ENCODE measurements at regions of chr3 and their contacts with region 1.

Region 1: DNA sequence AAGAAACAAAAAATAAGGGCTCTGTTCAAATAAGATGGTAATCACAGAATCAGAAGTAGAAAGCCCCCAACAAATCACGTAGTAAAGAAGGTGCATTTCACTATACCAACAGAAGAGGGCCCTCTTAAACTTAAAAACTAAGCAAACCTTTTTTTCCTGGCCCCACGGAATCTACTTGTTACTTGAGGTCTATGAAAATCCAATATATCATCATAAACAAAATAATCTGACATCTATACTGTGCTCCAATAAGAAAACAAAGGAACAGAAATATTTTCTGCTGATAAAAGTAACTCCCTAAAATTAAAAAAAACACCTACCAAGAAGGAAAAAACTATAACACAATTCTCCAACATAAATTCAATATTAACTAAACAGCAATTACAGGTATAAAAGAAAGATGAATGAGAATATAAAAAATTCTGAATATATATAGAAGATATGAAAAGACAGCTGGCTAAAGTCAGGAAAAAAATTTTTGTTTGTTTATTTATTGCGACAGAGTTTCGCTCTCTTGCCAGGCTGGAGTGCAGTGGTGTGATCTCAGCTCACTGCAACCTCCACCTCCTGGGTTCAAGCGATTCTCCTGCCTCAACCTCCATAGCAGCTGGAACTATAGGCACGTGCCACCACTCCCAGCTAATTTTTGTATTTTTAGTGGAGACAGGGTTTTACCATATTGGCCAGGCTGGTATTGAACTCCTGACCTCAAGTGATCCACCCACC is 81.8 kb downstream of the CLASP2 start:
- DNase-seq: no peak
- ATAC-seq: peak; percentile 53

Region 2: DNA sequence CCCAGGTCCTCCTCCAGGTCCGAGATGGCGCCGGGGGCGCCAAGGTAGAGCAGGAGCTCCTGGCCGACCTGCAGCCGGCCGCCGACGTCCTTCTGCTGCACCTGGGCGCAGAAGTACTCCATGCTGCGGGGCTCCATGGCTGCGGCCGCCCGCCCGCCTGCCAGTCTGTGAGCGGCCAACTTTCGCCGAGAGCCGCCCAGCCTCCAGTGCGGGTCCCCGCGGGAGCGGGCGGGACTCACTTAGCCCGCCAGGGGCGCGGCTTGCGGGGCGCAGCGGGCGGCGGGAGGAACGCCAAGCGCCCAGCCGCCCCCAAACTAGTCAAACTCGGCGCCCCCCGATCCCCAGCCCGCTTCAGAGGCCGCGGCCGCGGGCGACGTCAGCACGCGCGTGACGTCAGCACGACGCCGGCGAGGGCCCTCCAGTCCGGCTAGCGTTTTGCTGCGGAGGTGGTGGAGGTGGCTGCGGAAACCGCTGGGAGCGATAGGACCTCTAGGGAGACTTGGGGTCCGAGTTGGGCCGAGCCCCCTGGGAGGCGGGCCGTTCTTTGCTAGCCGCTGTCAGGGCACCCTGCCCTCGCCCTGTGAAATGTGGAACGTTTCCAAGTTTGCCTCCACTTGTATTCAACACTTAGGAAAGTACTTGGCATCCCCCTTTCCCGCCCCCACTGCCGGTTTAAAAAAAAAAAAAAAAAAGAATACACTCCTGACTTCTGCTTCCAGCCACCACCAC is 81.7 kb after region 1 on chr3 and contains the start of gene CLASP2:
- intact Hi-C with region 1: loop called (anchors 5 kb)
- DNase-seq: peak; percentile 93
- ATAC-seq: peak; percentile 98
- total RNA-seq, gene CLASP2: 68.3 TPM

Region 3: DNA sequence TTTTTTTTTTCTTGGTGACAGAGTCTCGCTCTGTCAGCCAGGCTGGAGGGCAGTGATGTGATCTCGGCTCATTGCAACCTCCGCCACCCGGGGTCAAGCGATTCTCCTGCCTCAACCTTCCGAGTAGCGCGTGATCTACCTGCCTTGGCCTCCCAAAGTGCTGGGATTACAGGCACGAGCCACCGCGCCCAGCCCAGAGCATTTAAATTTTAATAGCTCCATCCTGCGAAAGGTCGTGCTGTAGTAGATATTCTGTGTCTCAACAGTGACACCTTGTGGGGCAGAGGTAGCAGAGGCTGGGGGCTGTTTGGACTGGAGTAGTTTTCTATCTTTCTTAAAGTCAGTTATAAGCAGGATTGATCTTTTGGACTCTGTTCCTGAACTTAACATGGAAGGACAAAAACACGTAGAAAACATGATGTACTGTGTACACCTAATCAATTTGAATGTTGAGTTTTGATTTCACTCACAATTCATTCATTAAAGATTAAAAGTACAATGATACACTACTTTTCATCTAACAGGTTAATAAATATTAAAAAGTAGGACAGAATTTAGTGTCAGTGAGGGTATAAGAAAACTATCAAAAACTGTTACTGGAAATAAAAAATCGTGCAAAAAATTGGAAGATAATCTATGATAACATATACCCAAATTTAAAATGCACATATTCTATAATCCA is 151.2 kb after region 1 on chr3:
- intact Hi-C with region 1: loop called (anchors 5 kb)
- DNase-seq: no peak
- ATAC-seq: peak; percentile 94

Region 4: GRCh38 chr3:33868309-33868708 is 232.0 kb after region 1 on chr3:
- intact Hi-C with region 1: no loop called
- DNase-seq: no peak
- ATAC-seq: no peak